ENCODE measurements at regions of chr10 and their contacts with region 1.

Region 1: DNA sequence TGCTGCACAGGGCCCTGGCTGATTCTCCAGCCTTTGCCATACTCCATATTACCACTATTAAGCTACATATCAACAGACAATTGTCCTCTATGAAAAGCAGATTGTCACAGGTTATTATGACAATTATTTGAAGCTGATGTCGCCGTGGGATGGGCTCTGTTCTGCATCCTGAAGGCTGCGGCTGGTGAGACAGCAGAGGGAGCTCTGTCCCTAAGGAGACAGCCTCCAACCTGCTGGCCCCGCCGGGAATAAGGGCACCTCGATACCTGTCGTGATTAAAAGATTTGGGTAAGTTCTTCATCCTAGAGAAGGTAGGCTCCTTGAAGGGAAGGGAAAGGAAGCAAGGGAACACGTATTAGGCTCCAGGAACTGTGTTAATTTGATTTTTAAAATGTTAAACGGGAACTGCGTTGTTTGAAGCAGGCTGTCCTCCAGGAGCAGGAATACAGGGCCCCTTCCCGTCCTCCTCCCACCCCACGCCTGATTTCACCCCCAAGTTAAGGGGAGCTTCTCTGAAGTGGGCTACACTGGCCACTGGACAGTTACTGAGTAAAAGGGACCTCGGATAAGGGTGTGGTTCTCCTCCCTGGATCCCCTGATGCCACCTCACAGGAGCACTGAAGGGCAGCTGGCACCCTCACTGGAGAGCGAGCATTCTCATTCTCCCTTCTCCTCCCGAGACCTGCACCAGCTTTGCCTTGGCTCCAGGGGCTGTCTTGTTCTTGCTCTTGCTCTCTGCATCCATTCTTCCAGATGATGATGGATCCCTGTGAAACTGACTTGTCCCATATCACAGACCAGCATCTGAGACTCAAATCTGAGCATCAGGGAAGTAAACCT is 11.8 kb upstream of the TIAL1 start:
- DNase-seq: peak; percentile 27 to 74 (median 46)
- ATAC-seq: peak; percentile 77 to 94 (median 86)
- H3K4me3 ChIP-seq: peak overlapping the region in 2 of 12 donors; percentile 14 to 16
- H3K27ac ChIP-seq: no peak overlapping the region
- H3K4me1 ChIP-seq: peaks cover 0 to 3% (median 0%) of the 10 kb centered on the region in 12 donors
- H3K27me3 ChIP-seq: no peaks in the 10 kb centered on the region
- CTCF ChIP-seq: peak; percentile 37 to 76 (median 63)
- POLR2A ChIP-seq: no peak

Region 2: GRCh38 chr10:119644994-119645393 is 36.5 kb after region 1 on chr10:
- intact Hi-C with region 1: loop called in 2 of 10 experiments (anchors 5 kb)
- DNase-seq: no peak
- ATAC-seq: no peak
- H3K4me3 ChIP-seq: no peak overlapping the region
- H3K27ac ChIP-seq: no peak overlapping the region
- H3K4me1 ChIP-seq: no peaks in the 10 kb centered on the region
- H3K27me3 ChIP-seq: no peaks in the 10 kb centered on the region
- CTCF ChIP-seq: no peak
- POLR2A ChIP-seq: no peak

Region 3: DNA sequence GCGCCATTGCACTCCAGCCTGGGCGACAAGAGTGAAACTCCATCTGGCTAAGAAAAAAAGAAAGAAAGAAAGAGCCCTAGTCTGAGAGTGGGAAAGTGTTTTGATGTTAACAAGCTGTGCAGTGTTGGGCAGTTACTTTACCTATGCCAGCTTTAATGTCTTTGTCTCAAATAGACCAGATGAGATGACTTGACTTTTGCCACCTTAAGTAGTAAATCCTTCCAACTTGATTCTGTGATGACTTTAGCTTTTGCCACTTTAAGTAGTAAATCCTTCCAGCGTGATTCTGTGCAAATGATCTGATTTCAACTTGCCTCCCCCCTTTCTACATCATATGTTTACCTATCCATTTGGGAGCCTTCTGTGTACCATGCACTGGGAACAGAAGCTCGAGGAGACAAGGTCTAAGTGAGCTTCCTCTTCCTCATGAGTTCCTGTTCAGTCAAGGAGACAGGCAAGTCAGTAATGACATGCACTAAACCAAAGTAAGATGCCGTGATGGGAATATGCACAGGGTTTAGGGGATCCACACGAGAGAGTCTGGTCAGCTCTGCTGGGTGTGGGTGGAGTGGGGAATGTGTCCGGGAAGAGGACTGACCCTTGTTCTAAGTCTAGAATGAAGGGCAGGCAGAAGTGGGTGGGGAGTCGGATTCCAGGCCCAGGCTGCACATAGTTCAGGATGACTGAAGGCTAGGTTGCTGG is 134.6 kb after region 1 on chr10:
- intact Hi-C with region 1: loop called in 2 of 10 experiments (anchors 10 kb)
- DNase-seq: no peak
- ATAC-seq: peak in 1 of 4 donors; percentile 61
- H3K4me3 ChIP-seq: no peak overlapping the region
- H3K27ac ChIP-seq: no peak overlapping the region
- H3K4me1 ChIP-seq: peaks cover 0 to 14% (median 6%) of the 10 kb centered on the region in 12 donors
- H3K27me3 ChIP-seq: no peaks in the 10 kb centered on the region
- CTCF ChIP-seq: no peak
- POLR2A ChIP-seq: no peak

Region 4: DNA sequence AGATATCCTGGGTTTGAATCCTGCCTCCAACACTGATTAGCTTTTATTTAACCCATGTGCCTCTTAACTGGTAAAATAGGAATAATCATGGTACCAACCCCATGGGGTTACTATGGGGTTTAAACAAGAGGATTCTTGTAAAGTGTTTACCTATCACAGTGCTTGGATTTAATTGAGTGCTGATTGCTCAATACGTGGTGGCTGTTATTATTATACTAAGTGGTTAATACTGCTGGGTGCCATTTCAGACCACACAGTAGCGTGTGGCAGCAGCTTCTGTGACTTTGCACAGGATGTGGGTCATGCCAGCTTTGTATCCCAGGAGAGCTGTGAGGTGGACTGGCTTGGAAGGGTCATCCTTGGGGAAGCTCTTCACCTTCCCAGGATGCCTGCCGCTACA is 461.2 kb after region 1 on chr10:
- intact Hi-C with region 1: no loop called
- DNase-seq: no peak
- ATAC-seq: no peak
- H3K4me3 ChIP-seq: no peak overlapping the region
- H3K27ac ChIP-seq: no peak overlapping the region
- H3K4me1 ChIP-seq: no peaks in the 10 kb centered on the region
- H3K27me3 ChIP-seq: peaks cover 0 to 24% (median 0%) of the 10 kb centered on the region in 9 donors
- CTCF ChIP-seq: no peak
- POLR2A ChIP-seq: no peak